H1 (cell line): ENCODE measurements at regions of chr11 and their contacts with region 1.

Region 1: DNA sequence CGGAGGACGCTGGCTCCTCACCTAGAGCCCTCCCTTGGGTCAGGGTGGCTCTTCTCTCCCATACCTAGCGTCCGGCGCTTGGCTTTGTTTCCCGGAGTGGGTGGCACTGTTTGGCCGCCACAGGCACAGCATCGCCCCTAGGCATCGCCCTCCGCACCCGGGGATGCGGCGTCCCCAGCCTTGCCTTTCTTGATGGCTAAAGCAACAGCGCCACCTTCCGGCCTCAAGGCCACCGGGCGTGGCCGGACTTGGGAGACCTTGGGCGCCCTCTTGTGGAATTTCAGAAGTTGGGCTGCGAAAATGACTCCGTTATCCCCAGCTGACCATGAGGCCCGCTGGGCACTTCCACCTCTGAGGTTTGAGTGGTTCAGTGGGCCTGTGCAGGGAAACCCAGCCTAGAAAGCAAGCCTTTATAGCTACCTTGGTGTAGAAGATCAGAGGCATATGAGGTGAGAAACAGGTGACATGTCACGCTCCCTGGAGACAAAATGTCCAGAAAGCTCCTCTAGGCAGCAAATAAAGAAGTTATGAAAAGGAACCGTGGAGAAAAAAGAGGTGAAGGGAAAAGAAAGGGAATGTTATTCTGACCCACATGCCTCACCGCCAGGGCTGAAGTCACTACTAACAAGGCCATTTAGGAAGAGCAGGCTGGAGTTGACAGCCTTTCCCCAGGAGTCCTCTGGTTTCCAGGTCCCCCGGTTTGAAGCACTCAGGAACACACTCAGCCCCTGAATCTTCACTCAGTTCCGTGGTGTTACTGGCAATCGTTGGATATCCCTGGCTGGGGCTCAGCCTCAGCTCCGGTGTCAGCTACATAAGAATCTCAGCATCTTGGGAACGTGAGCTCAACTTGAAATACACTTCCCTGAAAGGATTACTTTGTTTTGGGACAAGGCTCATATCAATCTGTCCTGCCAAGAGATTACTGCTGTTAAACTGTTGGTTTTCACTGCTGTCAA is 54.1 kb downstream of the SNX19 start:
- DNase-seq: peak; percentile 91 to 94
- H3K4me3 ChIP-seq: no peak overlapping the region
- H3K27ac ChIP-seq: no peak overlapping the region
- H3K4me1 ChIP-seq: peaks cover 0 to 7% (median 2%) of the 10 kb centered on the region in 4 experiments; a peak in 4 of 7 replicates
- H3K27me3 ChIP-seq: peaks cover 0 to 9% (median 2%) of the 10 kb centered on the region in 4 experiments; a peak in 3 of 7 replicates
- CTCF ChIP-seq: peak; percentile 93 to 100 (median 99)
- EP300 ChIP-seq: no peak
- POLR2A ChIP-seq: no peak
- RAD21 ChIP-seq: peak; percentile 100

Region 2: GRCh38 chr11:130434521-130435223 is 427.5 kb before region 1 on chr11:
- CTCF ChIA-PET with region 1: interaction called, 521 read pairs
- POLR2A ChIA-PET with region 1: interaction called, 5 read pairs
- DNase-seq: peak in 1 of 2 experiments; percentile 77
- H3K4me3 ChIP-seq: peak overlapping the region; percentile 40 to 83 (median 66); a peak in 7 of 8 replicates
- H3K27ac ChIP-seq: no peak overlapping the region
- H3K4me1 ChIP-seq: no peaks in the 10 kb centered on the region
- H3K27me3 ChIP-seq: peaks cover 0 to 9% (median 6%) of the 10 kb centered on the region in 4 experiments; a peak in 6 of 7 replicates
- CTCF ChIP-seq: peak; percentile 90 to 92 (median 91)
- EP300 ChIP-seq: no peak
- POLR2A ChIP-seq: no peak
- RAD21 ChIP-seq: peak; percentile 88 to 90

Region 3: GRCh38 chr11:130549393-130549999 is 312.7 kb before region 1 on chr11:
- CTCF ChIA-PET with region 1: interaction called, 19 read pairs
- POLR2A ChIA-PET with region 1: no interaction called
- DNase-seq: no peak
- H3K4me3 ChIP-seq: no peak overlapping the region
- H3K27ac ChIP-seq: no peak overlapping the region
- H3K4me1 ChIP-seq: peaks cover 0 to 2% (median 0%) of the 10 kb centered on the region in 4 experiments; a peak in 1 of 7 replicates
- H3K27me3 ChIP-seq: no peaks in the 10 kb centered on the region; a peak in 1 of 7 replicates
- CTCF ChIP-seq: peak in 2 of 3 experiments; percentile 28 to 33; a peak in 2 of 4 replicates
- EP300 ChIP-seq: no peak
- POLR2A ChIP-seq: no peak
- RAD21 ChIP-seq: peak; percentile 50 to 66

Region 4: DNA sequence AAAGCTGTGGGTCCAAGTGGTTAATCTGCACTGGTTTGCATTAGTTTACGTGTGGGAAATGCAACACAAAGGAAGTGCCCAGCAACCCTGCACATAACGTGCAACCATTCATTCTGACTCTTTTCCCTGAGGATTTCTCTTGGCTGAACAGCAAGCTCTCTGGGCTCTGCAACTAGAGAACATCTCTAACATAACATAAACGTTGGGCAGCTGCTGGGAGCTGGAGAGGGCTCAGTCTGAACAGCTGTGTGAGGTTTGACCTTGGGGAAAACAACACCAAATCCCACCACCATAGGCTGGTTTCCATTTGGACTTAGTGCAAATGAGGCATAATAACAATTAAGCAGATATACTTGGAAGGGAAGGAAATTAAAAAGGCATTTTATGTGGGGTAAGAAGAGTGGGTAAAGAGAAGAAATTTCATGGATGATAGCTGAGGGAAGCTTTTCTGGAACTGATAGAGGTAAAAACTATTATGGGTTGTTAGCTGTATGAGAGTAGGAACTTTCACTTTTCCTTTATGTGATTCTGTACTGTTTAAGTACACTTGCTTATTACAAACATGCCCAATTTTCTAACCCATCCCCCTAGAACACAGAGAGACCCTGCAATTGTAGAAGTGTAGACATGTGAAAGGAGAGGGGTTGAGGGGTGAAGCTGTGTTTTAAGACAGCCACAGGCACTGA is 22.1 kb before region 1 on chr11:
- CTCF ChIA-PET with region 1: interaction called, 10 read pairs
- POLR2A ChIA-PET with region 1: no interaction called
- DNase-seq: no peak
- H3K4me3 ChIP-seq: no peak overlapping the region
- H3K27ac ChIP-seq: no peak overlapping the region
- H3K4me1 ChIP-seq: peaks cover 0 to 3% (median 0%) of the 10 kb centered on the region in 4 experiments; a peak in 2 of 7 replicates
- H3K27me3 ChIP-seq: no peaks in the 10 kb centered on the region; a peak in 1 of 7 replicates
- CTCF ChIP-seq: no peak
- EP300 ChIP-seq: no peak
- POLR2A ChIP-seq: no peak
- RAD21 ChIP-seq: no peak

Region 5: DNA sequence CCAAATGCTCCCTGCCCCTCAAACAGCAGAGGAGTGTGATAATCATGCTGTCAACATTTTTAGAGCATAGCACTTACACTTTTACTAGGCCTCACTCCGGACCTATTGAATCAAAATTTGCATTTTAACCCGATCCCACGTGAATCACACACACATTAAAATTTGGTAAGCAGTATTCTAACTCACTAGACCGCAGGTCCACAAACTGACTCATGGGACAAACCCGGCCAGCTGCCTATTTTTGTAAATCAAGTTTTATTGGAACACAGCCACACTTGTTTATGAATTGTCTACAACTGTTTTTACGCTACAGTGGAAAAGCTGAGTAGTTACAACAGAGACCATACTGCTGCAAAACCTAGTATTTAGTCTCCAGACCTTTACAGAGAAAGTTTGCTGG is 10.8 kb after region 1 on chr11:
- CTCF ChIA-PET with region 1: interaction called, 41 read pairs
- POLR2A ChIA-PET with region 1: no interaction called
- DNase-seq: no peak
- H3K4me3 ChIP-seq: no peak overlapping the region
- H3K27ac ChIP-seq: no peak overlapping the region
- H3K4me1 ChIP-seq: no peaks in the 10 kb centered on the region
- H3K27me3 ChIP-seq: no peaks in the 10 kb centered on the region
- CTCF ChIP-seq: no peak
- EP300 ChIP-seq: no peak
- POLR2A ChIP-seq: no peak
- RAD21 ChIP-seq: no peak

Region 6: GRCh38 chr11:130894322-130895025 is 32.3 kb after region 1 on chr11:
- CTCF ChIA-PET with region 1: interaction called, 115 read pairs
- POLR2A ChIA-PET with region 1: interaction called, 3 read pairs
- DNase-seq: peak; percentile 57 to 87
- H3K4me3 ChIP-seq: no peak overlapping the region
- H3K27ac ChIP-seq: no peak overlapping the region
- H3K4me1 ChIP-seq: peaks cover 2 to 8% (median 6%) of the 10 kb centered on the region in 4 experiments; a peak in 5 of 7 replicates
- H3K27me3 ChIP-seq: no peaks in the 10 kb centered on the region
- CTCF ChIP-seq: peak; percentile 75 to 90 (median 78)
- EP300 ChIP-seq: no peak
- POLR2A ChIP-seq: no peak
- RAD21 ChIP-seq: peak; percentile 84 to 86

Region 7: DNA sequence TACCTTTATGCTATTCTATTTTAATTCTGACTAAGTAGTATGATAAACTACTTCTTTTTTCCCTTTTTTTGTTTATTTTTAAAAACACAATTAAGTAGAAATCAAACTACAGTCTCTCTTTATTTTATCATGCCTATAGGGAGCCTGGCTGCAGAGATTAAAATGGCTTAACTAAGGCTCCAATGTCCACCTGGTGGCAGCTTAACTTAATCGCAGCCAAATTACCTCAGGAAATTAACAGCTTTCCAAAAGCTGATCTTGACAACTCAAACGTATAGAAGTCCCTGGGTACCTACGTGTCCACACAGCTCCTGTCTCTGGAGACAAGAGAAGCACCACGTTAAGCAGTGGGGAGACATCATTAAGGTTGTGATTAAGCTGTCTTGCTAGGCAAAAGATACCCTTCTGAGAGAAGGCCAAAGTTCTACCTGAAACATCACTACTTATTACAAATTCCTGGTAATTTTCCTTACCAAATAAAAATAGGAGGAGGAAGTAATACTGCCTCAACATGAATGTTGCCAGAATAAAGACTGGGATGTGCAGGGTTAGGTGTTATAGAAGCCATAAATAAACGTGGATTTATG is 117.3 kb after region 1 on chr11:
- CTCF ChIA-PET with region 1: no interaction called
- POLR2A ChIA-PET with region 1: no interaction called
- DNase-seq: no peak
- H3K4me3 ChIP-seq: no peak overlapping the region
- H3K27ac ChIP-seq: no peak overlapping the region
- H3K4me1 ChIP-seq: no peaks in the 10 kb centered on the region
- H3K27me3 ChIP-seq: no peaks in the 10 kb centered on the region
- CTCF ChIP-seq: peak in 2 of 3 experiments; percentile 58 to 69; a peak in 3 of 4 replicates
- EP300 ChIP-seq: no peak
- POLR2A ChIP-seq: no peak
- RAD21 ChIP-seq: peak; percentile 52 to 62